ENCODE measurements at regions of chr4 and their contacts with region 1.

Region 1: GRCh38 chr4:43148481-43148880 is 256.0 kb downstream of the GRXCR1 start:
- DNase-seq: no peak
- H3K4me3 ChIP-seq: no peak overlapping the region
- H3K27ac ChIP-seq: no peak overlapping the region
- H3K4me1 ChIP-seq: no peaks in the 10 kb centered on the region
- H3K27me3 ChIP-seq: no peaks in the 10 kb centered on the region
- CTCF ChIP-seq: no peak
- POLR2A ChIP-seq: no peak

Region 2: DNA sequence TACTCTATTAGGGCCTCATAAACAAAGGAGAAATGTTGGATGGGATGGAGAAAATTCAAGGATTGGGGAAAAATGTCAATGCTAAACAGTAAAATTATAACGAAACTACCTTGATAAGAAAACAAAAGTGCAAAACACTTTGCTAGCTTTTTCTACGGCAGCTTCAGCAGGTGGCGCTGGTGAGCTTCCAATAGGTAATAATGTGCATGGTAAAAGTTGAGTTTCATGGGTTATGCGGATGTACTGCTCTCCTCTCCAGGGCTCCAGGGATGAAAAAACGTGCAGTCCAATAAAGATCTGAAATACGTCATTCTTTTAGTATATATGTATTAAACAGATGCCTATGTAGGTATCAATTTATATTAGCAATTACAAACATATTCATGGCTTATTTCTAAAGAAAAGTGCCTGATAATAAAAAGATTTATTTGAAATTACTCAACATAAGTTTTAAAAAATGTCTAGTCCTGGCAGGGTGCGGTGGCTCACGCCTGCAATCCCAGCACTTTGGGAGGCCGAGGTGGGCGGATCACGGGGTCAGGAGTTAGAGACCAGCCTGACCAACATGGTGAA is 16.4 kb before region 1 on chr4:
- intact Hi-C with region 1: loop called (anchors 1 kb)
- DNase-seq: no peak
- H3K4me3 ChIP-seq: no peak overlapping the region
- H3K27ac ChIP-seq: no peak overlapping the region
- H3K4me1 ChIP-seq: no peaks in the 10 kb centered on the region
- H3K27me3 ChIP-seq: no peaks in the 10 kb centered on the region
- CTCF ChIP-seq: no peak
- POLR2A ChIP-seq: no peak

Region 3: DNA sequence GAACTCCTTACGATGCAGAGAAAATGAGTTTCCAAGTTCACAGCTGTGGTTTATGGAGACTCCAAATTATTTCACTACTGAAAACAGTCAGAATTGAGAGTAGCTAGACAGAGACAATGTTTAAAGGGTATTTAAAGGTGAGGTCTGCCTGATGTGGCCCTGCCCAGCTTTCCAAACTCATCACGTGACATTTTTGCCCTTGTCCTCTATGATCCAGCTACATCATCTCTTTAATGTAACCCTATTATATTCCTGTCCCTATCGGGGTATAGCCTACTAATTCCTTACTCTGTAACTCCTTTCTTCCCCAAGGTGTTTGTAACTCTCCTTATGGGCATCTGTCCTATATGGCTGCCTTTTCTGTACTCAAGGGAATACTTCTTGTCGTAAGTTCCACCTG is 41.3 kb after region 1 on chr4:
- intact Hi-C with region 1: no loop called
- DNase-seq: no peak
- H3K4me3 ChIP-seq: no peak overlapping the region
- H3K27ac ChIP-seq: no peak overlapping the region
- H3K4me1 ChIP-seq: no peaks in the 10 kb centered on the region
- H3K27me3 ChIP-seq: no peaks in the 10 kb centered on the region
- CTCF ChIP-seq: no peak
- POLR2A ChIP-seq: no peak

Region 4: DNA sequence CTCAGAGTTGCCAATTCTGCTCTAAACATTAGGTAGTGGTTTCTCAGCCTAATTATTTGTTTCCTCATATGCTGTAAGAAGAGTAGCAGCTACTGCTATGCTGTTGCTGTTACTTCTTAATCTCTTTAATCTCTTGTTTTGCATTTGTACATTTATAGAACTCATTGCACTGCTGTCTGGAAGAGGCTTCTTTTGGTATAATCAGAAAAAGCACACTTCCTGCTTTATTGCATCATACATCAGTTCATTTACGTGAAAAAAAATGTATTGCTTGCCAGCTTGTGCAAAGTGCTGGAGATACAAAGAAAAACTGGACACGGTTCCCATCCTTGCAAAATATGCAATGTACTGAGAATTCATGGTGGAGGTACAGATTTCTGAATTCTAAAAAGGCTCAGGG is 76.1 kb after region 1 on chr4:
- intact Hi-C with region 1: no loop called
- DNase-seq: no peak
- H3K4me3 ChIP-seq: no peak overlapping the region
- H3K27ac ChIP-seq: no peak overlapping the region
- H3K4me1 ChIP-seq: no peaks in the 10 kb centered on the region
- H3K27me3 ChIP-seq: no peaks in the 10 kb centered on the region
- CTCF ChIP-seq: no peak
- POLR2A ChIP-seq: no peak